Activated naive CD4-positive, alpha-beta T cell treated with anti-CD3 and anti-CD28 coated beads for 36 hours (primary cell): ENCODE measurements at regions of chr10 and their contacts with region 1.

Region 1: DNA sequence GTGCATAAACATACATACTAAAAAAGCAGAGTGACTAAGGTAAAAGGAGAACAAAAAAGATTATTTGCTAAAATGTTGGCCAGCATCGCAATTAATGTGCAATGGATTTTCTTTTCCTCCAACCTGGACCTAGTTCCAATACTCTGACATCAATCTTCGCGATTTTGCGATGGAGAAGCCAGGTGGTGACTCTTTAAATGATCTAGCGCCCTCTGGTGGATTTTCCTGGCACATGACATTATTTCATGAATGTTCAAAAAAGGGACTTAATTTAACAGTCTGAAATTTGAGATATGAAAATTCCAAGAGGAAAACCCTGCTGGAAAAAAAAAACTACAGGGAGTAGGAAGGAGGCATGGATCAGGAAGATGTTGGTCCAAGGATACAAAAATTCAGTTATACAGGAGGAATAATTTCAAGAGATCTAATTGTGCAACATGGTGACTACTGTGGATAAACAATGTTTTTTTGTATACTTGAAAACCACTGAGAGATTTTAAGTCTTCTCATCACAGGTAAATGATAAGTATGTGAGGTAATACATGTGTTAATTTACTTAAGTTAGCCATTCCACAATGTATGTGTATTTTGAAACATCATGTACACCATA is 4.3 kb upstream of the KCNMA1 start:
- DNase-seq: peak; percentile 72
- H3K4me3 Mint-ChIP-seq: no peak overlapping the region
- H3K27ac Mint-ChIP-seq: no peak overlapping the region
- H3K4me1 Mint-ChIP-seq: peaks cover 3% of the 10 kb centered on the region
- H3K27me3 Mint-ChIP-seq: peaks cover 39% of the 10 kb centered on the region

Region 2: GRCh38 chr10:77165445-77166208 is 476.3 kb before region 1 on chr10:
- CTCF ChIA-PET with region 1: interaction called, 137 read pairs
- intact Hi-C with region 1: loop called (anchors 1 kb)
- DNase-seq: peak; percentile 60
- H3K4me3 Mint-ChIP-seq: peak overlapping the region; percentile 34
- H3K27ac Mint-ChIP-seq: no peak overlapping the region
- H3K4me1 Mint-ChIP-seq: peaks cover 3% of the 10 kb centered on the region
- H3K27me3 Mint-ChIP-seq: peaks cover 31% of the 10 kb centered on the region

Region 3: DNA sequence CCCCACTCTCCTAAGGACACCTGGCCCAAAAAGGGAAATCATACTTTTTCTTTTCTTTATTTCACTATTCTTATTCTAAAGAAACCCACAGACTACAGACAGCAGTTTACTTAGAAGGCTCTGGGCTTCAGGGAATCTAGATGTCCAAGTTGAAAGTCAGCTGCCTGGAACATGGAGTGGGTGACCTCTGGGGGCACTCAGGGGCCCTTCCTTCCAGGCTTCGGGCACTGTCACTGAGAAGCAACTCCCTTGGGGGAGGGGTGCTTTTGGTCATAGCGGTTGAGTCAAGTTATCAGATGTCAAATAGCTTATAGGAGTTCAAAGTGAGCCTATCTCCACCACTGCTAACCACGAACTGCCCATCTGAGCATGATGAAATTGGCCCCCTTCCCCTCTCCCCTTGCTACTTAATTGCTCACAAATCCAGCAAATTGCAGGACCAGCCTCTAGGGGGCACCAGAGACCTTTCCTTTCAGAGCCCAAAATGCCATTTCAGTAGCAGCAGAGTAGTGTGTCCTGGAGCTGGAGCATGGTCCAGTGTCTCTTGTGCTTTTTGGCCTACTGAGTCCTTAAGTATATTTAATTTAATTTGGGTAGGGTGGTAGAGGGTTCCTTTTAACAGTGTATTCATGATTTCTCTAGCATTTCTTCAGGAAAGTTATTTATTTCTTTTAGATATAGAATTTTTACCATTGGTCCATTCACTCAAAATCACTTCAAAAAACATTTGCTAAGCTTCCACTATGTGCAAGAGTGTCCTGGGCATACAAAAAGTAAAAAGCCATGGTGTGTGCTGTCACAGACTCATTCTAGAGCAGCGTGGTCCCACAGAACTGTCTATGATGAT is 468.1 kb before region 1 on chr10:
- CTCF ChIA-PET with region 1: interaction called, 137 read pairs
- intact Hi-C with region 1: loop called (anchors 1 kb)
- DNase-seq: peak; percentile 82
- H3K4me3 Mint-ChIP-seq: no peak overlapping the region
- H3K27ac Mint-ChIP-seq: no peak overlapping the region
- H3K4me1 Mint-ChIP-seq: no peaks in the 10 kb centered on the region
- H3K27me3 Mint-ChIP-seq: peaks cover 16% of the 10 kb centered on the region

Region 4: GRCh38 chr10:77251297-77252013 is 390.4 kb before region 1 on chr10:
- CTCF ChIA-PET with region 1: interaction called, 3 read pairs
- intact Hi-C with region 1: loop called (anchors 5 kb)
- DNase-seq: peak; percentile 9
- H3K4me3 Mint-ChIP-seq: no peak overlapping the region
- H3K27ac Mint-ChIP-seq: no peak overlapping the region
- H3K4me1 Mint-ChIP-seq: no peaks in the 10 kb centered on the region
- H3K27me3 Mint-ChIP-seq: peaks cover 2% of the 10 kb centered on the region

Region 5: DNA sequence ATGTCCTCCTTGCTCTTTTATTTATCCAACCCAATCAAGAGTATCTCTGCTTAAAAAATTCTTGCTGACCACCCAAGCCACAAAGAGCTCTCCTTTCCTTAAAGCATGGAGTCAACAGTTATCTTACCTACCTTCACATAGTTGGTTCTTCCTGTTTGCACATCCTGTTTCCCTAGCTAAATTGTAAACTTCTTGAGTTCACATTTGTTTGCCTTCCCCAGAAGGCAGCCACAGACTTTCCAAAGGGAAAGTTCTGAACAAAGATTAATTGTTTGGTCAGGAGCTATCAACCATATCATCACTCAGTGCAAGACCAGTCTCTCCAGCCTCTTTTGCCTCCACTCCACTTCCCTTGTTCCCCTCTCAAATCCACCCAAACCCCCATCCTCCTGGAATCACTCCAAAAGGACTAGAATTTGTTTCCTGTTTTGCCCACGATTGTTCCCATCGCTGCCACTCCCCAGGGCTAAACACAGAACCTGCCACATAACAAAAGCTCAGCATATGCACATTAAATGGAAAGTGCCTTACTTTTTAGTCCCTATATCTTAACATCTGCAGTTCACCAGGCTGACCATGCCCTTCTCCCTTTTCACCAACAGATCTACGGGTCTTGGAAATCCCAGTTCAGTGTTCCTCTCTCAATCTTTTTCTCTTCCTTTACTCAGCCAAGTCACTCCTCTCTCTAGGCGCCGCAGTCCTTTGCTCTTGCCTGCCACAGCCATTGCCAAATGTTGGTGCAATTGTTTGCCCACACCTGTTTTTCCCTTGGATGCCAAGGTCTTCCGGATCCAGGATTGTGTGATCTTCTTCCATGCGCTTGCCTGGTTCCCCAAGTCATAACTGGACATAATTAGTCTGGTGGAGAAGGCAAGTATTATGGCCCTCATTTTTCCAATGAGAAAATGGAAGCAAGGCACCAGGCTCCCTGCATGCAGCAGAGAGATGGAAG is 269.8 kb before region 1 on chr10:
- CTCF ChIA-PET with region 1: no interaction called
- intact Hi-C with region 1: no loop called
- DNase-seq: no peak
- H3K4me3 Mint-ChIP-seq: no peak overlapping the region
- H3K27ac Mint-ChIP-seq: no peak overlapping the region
- H3K4me1 Mint-ChIP-seq: no peaks in the 10 kb centered on the region
- H3K27me3 Mint-ChIP-seq: peaks cover 2% of the 10 kb centered on the region

Region 6: GRCh38 chr10:77391605-77392235 is 250.2 kb before region 1 on chr10:
- CTCF ChIA-PET with region 1: no interaction called
- intact Hi-C with region 1: loop called (anchors 5 kb)
- DNase-seq: peak; percentile 47
- H3K4me3 Mint-ChIP-seq: no peak overlapping the region
- H3K27ac Mint-ChIP-seq: no peak overlapping the region
- H3K4me1 Mint-ChIP-seq: peaks cover 2% of the 10 kb centered on the region
- H3K27me3 Mint-ChIP-seq: peaks cover 7% of the 10 kb centered on the region

Region 7: GRCh38 chr10:77501152-77501845 is 140.6 kb before region 1 on chr10:
- CTCF ChIA-PET with region 1: no interaction called
- intact Hi-C with region 1: no loop called
- DNase-seq: no peak
- H3K4me3 Mint-ChIP-seq: no peak overlapping the region
- H3K27ac Mint-ChIP-seq: no peak overlapping the region
- H3K4me1 Mint-ChIP-seq: no peaks in the 10 kb centered on the region
- H3K27me3 Mint-ChIP-seq: no peaks in the 10 kb centered on the region